Activated CD4-positive, alpha-beta T cell treated with anti-CD3 and anti-CD28 coated beads, Interleukin-2, amount 10 ng/mL, durations not matched to agents 7 days and 5 days (primary cell): ENCODE measurements at regions of chr2 and their contacts with region 1.

Region 1: GRCh38 chr2:28880193-28880592 is 10.1 kb upstream of the TRMT61B start:
- DNase-seq: no peak
- H3K4me3 Mint-ChIP-seq: no peak overlapping the region
- H3K27ac Mint-ChIP-seq: no peak overlapping the region
- H3K4me1 Mint-ChIP-seq: no peaks in the 10 kb centered on the region
- H3K27me3 Mint-ChIP-seq: peaks cover 27% of the 10 kb centered on the region

Region 2: GRCh38 chr2:28893476-28893875 is 13.3 kb after region 1 on chr2:
- CTCF ChIA-PET with region 1: interaction called, 11 read pairs
- POLR2A ChIA-PET with region 1: no interaction called
- DNase-seq: no peak
- H3K4me3 Mint-ChIP-seq: peak overlapping the region; percentile 79
- H3K27ac Mint-ChIP-seq: no peak overlapping the region
- H3K4me1 Mint-ChIP-seq: peaks cover 30% of the 10 kb centered on the region
- H3K27me3 Mint-ChIP-seq: peaks cover 4% of the 10 kb centered on the region